ENCODE measurements at regions of chr4 and their contacts with region 1.

Region 1: GRCh38 chr4:1712216-1713002 is at the start of gene SLBP:
- DNase-seq: peak; percentile 94 to 99 (median 98)
- ATAC-seq: peak; percentile 85 to 88 (median 87)
- H3K4me3 ChIP-seq: peak within 1 kb of the TSS; percentile 88 to 90
- H3K4me3 Mint-ChIP-seq: peak within 1 kb of the TSS; percentile 96
- H3K27ac ChIP-seq: peak within 1 kb of the TSS; percentile 73
- H3K27ac Mint-ChIP-seq: peak within 1 kb of the TSS; percentile 96
- H3K4me1 ChIP-seq: peaks cover 14 to 65% of the 10 kb centered on the region in 2 experiments
- H3K4me1 Mint-ChIP-seq: peaks cover 49 to 70% (median 65%) of the 10 kb centered on the region in 3 donors
- H3K27me3 ChIP-seq: no peaks in the 10 kb centered on the region
- H3K27me3 Mint-ChIP-seq: no peaks in the 10 kb centered on the region
- total RNA-seq, gene SLBP: 30.1 to 42.3 (median 36.1) TPM

Region 2: GRCh38 chr4:1636490-1637211 is 75.8 kb before region 1 on chr4:
- CTCF ChIA-PET with region 1: no interaction called
- POLR2A ChIA-PET with region 1: interaction called in 1 of 2 experiments, 14 read pairs
- DNase-seq: no peak
- ATAC-seq: no peak
- H3K4me3 ChIP-seq: no peak overlapping the region
- H3K4me3 Mint-ChIP-seq: no peak overlapping the region
- H3K27ac ChIP-seq: no peak overlapping the region
- H3K27ac Mint-ChIP-seq: no peak overlapping the region
- H3K4me1 ChIP-seq: no peaks in the 10 kb centered on the region
- H3K4me1 Mint-ChIP-seq: no peaks in the 10 kb centered on the region
- H3K27me3 ChIP-seq: peaks cover 0 to 32% of the 10 kb centered on the region in 2 experiments
- H3K27me3 Mint-ChIP-seq: peaks cover 0 to 2% of the 10 kb centered on the region in 2 donors

Region 3: DNA sequence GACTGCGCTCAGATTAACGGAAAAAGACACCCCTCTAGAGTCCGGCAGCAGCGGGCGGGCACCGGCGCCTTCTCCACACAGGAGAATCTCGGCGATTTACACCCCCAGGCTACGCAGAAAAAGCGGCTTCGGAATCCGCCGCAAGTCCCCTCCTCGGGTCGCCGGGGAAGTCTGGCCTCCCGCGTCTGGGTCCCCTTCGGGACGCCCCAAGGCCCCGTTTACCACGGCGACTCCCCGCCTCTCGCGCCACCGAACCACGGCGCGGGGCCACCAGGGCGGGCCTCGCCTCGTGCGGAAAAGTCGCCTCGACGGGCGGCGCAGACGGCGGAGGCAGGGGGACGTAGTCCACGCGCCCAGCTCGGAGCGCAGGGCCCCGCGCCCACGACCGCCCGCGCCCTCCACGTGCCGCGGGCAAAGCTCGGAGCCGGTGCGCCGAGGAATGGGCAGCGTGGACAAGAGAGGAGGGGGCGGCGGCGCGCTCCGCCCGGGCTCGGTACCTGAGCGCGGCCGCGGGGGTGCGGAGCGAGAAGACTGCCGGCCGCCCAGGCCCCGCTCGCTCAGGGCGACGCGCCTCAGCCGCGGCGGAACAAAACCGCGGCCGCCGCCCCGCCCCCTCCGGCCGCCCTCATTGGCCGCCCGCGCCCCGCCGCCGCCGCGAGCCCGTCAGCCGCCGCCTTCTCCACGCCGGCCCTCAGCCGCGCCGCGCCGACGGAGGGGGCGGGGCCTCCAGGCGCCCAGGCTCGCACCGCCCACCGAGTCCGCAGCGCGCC is 28.5 kb before region 1 on chr4 and contains the start of gene FAM53A:
- CTCF ChIA-PET with region 1: interaction called, 8 to 10 read pairs
- POLR2A ChIA-PET with region 1: no interaction called
- DNase-seq: peak in 25 of 35 experiments; percentile 2 to 95 (median 24)
- ATAC-seq: peak; percentile 91 to 95 (median 93)
- H3K4me3 ChIP-seq: peak within 1 kb of the TSS; percentile 35 to 78
- H3K4me3 Mint-ChIP-seq: peak within 1 kb of the TSS; percentile 81 to 87 (median 86)
- H3K27ac ChIP-seq: peak within 1 kb of the TSS; percentile 2
- H3K27ac Mint-ChIP-seq: peak within 1 kb of the TSS; percentile 83 to 87
- H3K4me1 ChIP-seq: peaks cover 9 to 13% of the 10 kb centered on the region in 2 experiments
- H3K4me1 Mint-ChIP-seq: peaks cover 10 to 13% (median 13%) of the 10 kb centered on the region in 3 donors
- H3K27me3 ChIP-seq: no peaks in the 10 kb centered on the region
- H3K27me3 Mint-ChIP-seq: no peaks in the 10 kb centered on the region
- total RNA-seq, gene FAM53A: 1.4 to 3.0 (median 1.9) TPM